HCT116 (cell line): ENCODE measurements at regions of chr6 and their contacts with region 1.

Region 1: GRCh38 chr6:84411060-84411629 is 183.7 kb upstream of the CEP162 start:
- DNase-seq: no peak
- ATAC-seq: no peak
- H3K4me3 ChIP-seq: no peak overlapping the region
- H3K27ac ChIP-seq: no peak overlapping the region
- H3K4me1 ChIP-seq: no peaks in the 10 kb centered on the region
- H3K27me3 ChIP-seq: peaks cover 44% of the 10 kb centered on the region
- CTCF ChIP-seq: no peak
- POLR2A ChIP-seq: no peak
- RAD21 ChIP-seq: no peak

Region 2: DNA sequence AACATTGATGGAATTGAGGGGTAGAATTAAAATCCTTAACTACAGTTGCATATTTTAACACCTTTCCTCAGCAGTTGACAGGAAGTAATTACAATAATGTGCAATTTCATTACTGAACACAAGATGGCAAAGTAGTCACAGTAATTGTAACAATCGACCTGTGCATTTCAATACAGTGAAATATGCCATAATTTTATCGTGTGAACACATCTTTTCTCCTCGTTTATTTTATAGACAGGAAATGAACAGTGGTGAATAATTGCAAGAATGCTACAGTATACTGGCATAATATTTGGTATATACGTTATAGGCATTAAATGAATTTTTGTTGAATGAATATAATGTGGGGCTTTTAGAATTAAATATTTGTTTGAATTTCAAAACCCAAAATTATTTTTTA is 526.6 kb before region 1 on chr6:
- CTCF ChIA-PET with region 1: no interaction called
- POLR2A ChIA-PET with region 1: no interaction called
- RAD21 ChIA-PET with region 1: no interaction called
- intact Hi-C with region 1: loop called (anchors 10 kb)
- DNase-seq: peak; percentile 42
- ATAC-seq: peak; percentile 76
- H3K4me3 ChIP-seq: no peak overlapping the region
- H3K27ac ChIP-seq: no peak overlapping the region
- H3K4me1 ChIP-seq: no peaks in the 10 kb centered on the region
- H3K27me3 ChIP-seq: no peaks in the 10 kb centered on the region
- CTCF ChIP-seq: peak; percentile 46 to 79 (median 72); a peak in 5 of 6 replicates
- POLR2A ChIP-seq: no peak
- RAD21 ChIP-seq: peak; percentile 89

Region 3: GRCh38 chr6:84422380-84422968 is 11.3 kb after region 1 on chr6:
- CTCF ChIA-PET with region 1: interaction called, 13 read pairs
- POLR2A ChIA-PET with region 1: no interaction called
- RAD21 ChIA-PET with region 1: no interaction called
- intact Hi-C with region 1: no loop called
- DNase-seq: peak; percentile 31
- ATAC-seq: peak; percentile 99
- H3K4me3 ChIP-seq: peak overlapping the region in 1 of 2 experiments; percentile 20; a peak in 1 of 4 replicates
- H3K27ac ChIP-seq: no peak overlapping the region
- H3K4me1 ChIP-seq: 0 out of 4 replicates have a peak, but pooled peaks cover 0 to 3% of the 10 kb centered on the region in 2 experiments
- H3K27me3 ChIP-seq: 0 out of 2 replicates have a peak, but pooled peaks cover 8% of the 10 kb centered on the region
- CTCF ChIP-seq: peak; percentile 79 to 97 (median 93)
- POLR2A ChIP-seq: no peak
- RAD21 ChIP-seq: peak; percentile 84

Region 4: GRCh38 chr6:84466511-84466910 is 55.4 kb after region 1 on chr6:
- CTCF ChIA-PET with region 1: no interaction called
- POLR2A ChIA-PET with region 1: no interaction called
- RAD21 ChIA-PET with region 1: no interaction called
- intact Hi-C with region 1: no loop called
- DNase-seq: peak; percentile 16
- ATAC-seq: peak; percentile 76
- H3K4me3 ChIP-seq: no peak overlapping the region
- H3K27ac ChIP-seq: no peak overlapping the region
- H3K4me1 ChIP-seq: peaks cover 0 to 6% of the 10 kb centered on the region in 2 experiments; a peak in 1 of 4 replicates
- H3K27me3 ChIP-seq: no peaks in the 10 kb centered on the region
- CTCF ChIP-seq: no peak
- POLR2A ChIP-seq: no peak
- RAD21 ChIP-seq: no peak